Common myeloid progenitor, CD34-positive (primary cell): ENCODE measurements at regions of chr2 and their contacts with region 1.

Region 1: GRCh38 chr2:101770726-101771125 is 73.2 kb downstream of the MAP4K4 start:
- DNase-seq: peak; percentile 61 to 72 (median 71)
- H3K4me3 ChIP-seq: no peak overlapping the region
- H3K27ac ChIP-seq: no peak overlapping the region
- H3K4me1 ChIP-seq: peaks cover 9 to 69% (median 17%) of the 10 kb centered on the region in 4 experiments
- H3K27me3 ChIP-seq: no peaks in the 10 kb centered on the region

Region 2: GRCh38 chr2:101781326-101781725 is 10.6 kb after region 1 on chr2:
- CTCF ChIA-PET with region 1: interaction called, 31 read pairs
- POLR2A ChIA-PET with region 1: interaction called, 3 read pairs
- DNase-seq: peak; percentile 73 to 93 (median 91)
- H3K4me3 ChIP-seq: no peak overlapping the region
- H3K27ac ChIP-seq: peak overlapping the region in 1 of 2 experiments; percentile 32
- H3K4me1 ChIP-seq: peaks cover 11 to 30% (median 13%) of the 10 kb centered on the region in 4 experiments
- H3K27me3 ChIP-seq: no peaks in the 10 kb centered on the region

Region 3: GRCh38 chr2:101793277-101793969 is 22.7 kb after region 1 on chr2:
- CTCF ChIA-PET with region 1: interaction called, 13 read pairs
- POLR2A ChIA-PET with region 1: no interaction called
- DNase-seq: peak in 1 of 3 donors; percentile 17
- H3K4me3 ChIP-seq: no peak overlapping the region
- H3K27ac ChIP-seq: no peak overlapping the region
- H3K4me1 ChIP-seq: peaks cover 0 to 14% (median 5%) of the 10 kb centered on the region in 4 experiments
- H3K27me3 ChIP-seq: no peaks in the 10 kb centered on the region

Region 4: DNA sequence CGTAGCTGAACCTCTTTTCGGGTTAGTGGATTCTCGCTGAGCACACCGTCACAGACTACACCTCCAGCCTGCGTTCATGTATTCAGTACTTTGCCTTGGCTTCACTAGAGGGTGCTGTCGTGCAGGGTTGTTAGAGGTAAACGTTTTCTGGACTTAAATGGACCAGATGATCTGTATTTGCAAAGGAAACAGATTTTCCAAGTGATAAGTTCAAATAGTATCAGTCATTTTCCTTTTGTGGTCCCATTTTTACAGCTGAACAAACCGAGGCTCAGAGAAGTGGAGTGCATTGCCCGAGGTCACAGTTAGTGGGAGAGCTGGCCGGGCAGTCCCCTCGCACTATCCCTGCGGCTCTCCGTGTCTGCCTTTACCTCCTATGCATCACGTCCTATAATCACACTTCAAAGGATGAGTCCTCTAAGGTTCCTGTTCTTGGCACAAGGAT is 52.6 kb after region 1 on chr2:
- CTCF ChIA-PET with region 1: interaction called, 31 read pairs
- POLR2A ChIA-PET with region 1: no interaction called
- DNase-seq: peak; percentile 75 to 92 (median 89)
- H3K4me3 ChIP-seq: peak overlapping the region in 2 of 7 experiments; percentile 13 to 50
- H3K27ac ChIP-seq: no peak overlapping the region
- H3K4me1 ChIP-seq: peaks cover 3 to 26% (median 12%) of the 10 kb centered on the region in 4 experiments
- H3K27me3 ChIP-seq: no peaks in the 10 kb centered on the region

Region 5: GRCh38 chr2:101831351-101831865 is 60.7 kb after region 1 on chr2:
- CTCF ChIA-PET with region 1: interaction called, 40 read pairs
- POLR2A ChIA-PET with region 1: no interaction called
- DNase-seq: peak; percentile 61 to 78 (median 77)
- H3K4me3 ChIP-seq: no peak overlapping the region
- H3K27ac ChIP-seq: no peak overlapping the region
- H3K4me1 ChIP-seq: peaks cover 0 to 28% (median 5%) of the 10 kb centered on the region in 4 experiments
- H3K27me3 ChIP-seq: no peaks in the 10 kb centered on the region